ENCODE measurements at regions of chr1 and their contacts with region 1.

Region 1: GRCh38 chr1:239786464-239786863 is 305.2 kb upstream of the FMN2 start:
- DNase-seq: peak in 1 of 2 experiments; percentile 64
- H3K4me3 ChIP-seq: no peak overlapping the region
- H3K27ac ChIP-seq: no peak overlapping the region
- H3K4me1 ChIP-seq: peaks cover 0 to 3% (median 1%) of the 10 kb centered on the region in 4 experiments; a peak in 3 of 7 replicates
- H3K27me3 ChIP-seq: no peaks in the 10 kb centered on the region
- CTCF ChIP-seq: no peak
- EP300 ChIP-seq: no peak
- POLR2A ChIP-seq: no peak
- RAD21 ChIP-seq: no peak

Region 2: GRCh38 chr1:239805851-239806772 is 19.6 kb after region 1 on chr1:
- CTCF ChIA-PET with region 1: interaction called, 10 read pairs
- POLR2A ChIA-PET with region 1: no interaction called
- DNase-seq: no peak
- H3K4me3 ChIP-seq: no peak overlapping the region
- H3K27ac ChIP-seq: no peak overlapping the region
- H3K4me1 ChIP-seq: peaks cover 0 to 18% (median 12%) of the 10 kb centered on the region in 4 experiments; a peak in 5 of 7 replicates
- H3K27me3 ChIP-seq: no peaks in the 10 kb centered on the region
- CTCF ChIP-seq: no peak
- EP300 ChIP-seq: no peak
- POLR2A ChIP-seq: no peak
- RAD21 ChIP-seq: no peak

Region 3: GRCh38 chr1:239868058-239868832 is 81.8 kb after region 1 on chr1:
- CTCF ChIA-PET with region 1: no interaction called
- POLR2A ChIA-PET with region 1: no interaction called
- DNase-seq: no peak
- H3K4me3 ChIP-seq: no peak overlapping the region
- H3K27ac ChIP-seq: no peak overlapping the region
- H3K4me1 ChIP-seq: no peaks in the 10 kb centered on the region
- H3K27me3 ChIP-seq: no peaks in the 10 kb centered on the region
- CTCF ChIP-seq: no peak
- EP300 ChIP-seq: no peak
- POLR2A ChIP-seq: no peak
- RAD21 ChIP-seq: peak in 1 of 2 experiments; percentile 16; a peak in 1 of 4 replicates

Measured in H1 (cell line).